GM12878 (cell line): ENCODE measurements at regions of chr12 and their contacts with region 1.

Region 1: GRCh38 chr12:39788235-39788634 is 168.6 kb upstream of the ABCD2 start:
- DNase-seq: no peak
- ATAC-seq: no peak
- H3K4me3 ChIP-seq: no peak overlapping the region
- H3K27ac ChIP-seq: no peak overlapping the region
- H3K4me1 ChIP-seq: no peaks in the 10 kb centered on the region
- H3K27me3 ChIP-seq: no peaks in the 10 kb centered on the region
- CTCF ChIP-seq: no peak
- EP300 ChIP-seq: no peak
- POLR2A ChIP-seq: no peak
- RAD21 ChIP-seq: no peak

Region 2: DNA sequence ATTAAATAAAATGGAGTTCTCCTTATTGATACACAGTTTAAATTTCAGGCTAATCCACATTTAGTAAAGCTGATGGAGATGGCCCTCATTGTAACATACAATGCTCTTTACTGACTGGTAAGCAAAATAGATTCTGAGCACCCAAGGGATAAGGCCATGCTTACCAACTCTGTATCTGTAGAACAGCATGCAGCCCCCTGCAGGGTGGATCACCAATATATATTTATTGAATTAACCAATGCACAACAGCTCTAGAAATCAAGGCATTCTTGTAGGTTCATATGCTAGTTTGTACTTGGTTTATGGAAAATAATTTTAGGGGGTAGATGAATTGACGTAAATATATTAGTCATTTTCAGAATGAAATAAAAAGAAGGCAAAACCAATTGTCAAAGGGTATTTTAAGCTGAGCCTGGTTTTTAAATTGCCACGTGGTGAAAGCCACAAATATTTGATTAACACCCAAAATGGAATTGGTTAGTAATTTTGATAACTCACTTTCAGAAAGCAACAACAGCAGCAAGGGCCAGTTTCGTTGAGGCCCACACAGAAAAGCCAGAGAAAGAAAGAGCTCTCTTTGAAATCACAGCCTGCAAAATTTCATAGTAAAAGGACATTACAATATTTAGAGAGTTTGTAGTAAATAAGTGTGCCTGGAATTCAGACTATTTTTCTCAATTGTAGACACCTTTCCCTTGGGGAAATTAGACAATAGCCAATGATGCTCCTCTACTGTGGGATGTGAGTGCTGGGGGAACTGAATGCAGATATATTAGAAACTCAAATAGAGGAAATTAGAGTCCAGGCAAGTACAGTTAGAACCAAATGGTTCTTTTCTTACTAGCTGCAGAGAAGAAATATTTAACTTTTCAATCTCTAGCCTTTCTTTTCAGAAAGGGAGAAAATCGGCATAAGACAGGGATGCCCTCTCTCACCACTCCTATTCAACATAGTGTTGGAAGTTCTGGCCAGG is 47.6 kb after region 1 on chr12:
- CTCF ChIA-PET with region 1: no interaction called
- POLR2A ChIA-PET with region 1: no interaction called
- RAD21 ChIA-PET with region 1: no interaction called
- SMC1A ChIA-PET with region 1: no interaction called
- in situ Hi-C with region 1: no loop called
- intact Hi-C with region 1: loop called (anchors 5 kb)
- DNase-seq: peak; percentile 19
- ATAC-seq: peak; percentile 80
- H3K4me3 ChIP-seq: no peak overlapping the region
- H3K27ac ChIP-seq: no peak overlapping the region
- H3K4me1 ChIP-seq: no peaks in the 10 kb centered on the region
- H3K27me3 ChIP-seq: no peaks in the 10 kb centered on the region
- CTCF ChIP-seq: no peak
- EP300 ChIP-seq: peak; percentile 38 to 59; a peak in 2 of 4 replicates
- POLR2A ChIP-seq: no peak
- RAD21 ChIP-seq: no peak

Region 3: DNA sequence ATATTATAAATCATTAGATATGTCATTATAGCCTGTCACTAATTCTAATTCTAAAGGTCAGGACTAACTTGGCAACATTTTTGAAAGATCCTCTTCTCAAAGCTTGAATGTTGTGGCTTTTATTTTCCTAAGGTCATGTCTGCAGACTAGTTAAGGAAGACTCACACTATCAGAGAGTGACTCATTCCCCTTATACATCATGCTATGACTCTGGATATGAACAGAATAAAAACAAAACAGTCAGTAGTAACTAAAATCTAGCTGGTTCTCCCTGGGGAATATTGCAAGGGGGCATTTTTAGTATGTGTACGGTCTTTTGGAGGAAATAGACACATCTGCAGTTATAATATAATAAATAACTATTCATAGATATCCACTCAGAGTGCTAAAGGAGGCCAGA is 147.0 kb after region 1 on chr12:
- CTCF ChIA-PET with region 1: no interaction called
- POLR2A ChIA-PET with region 1: no interaction called
- RAD21 ChIA-PET with region 1: no interaction called
- SMC1A ChIA-PET with region 1: no interaction called
- in situ Hi-C with region 1: no loop called
- intact Hi-C with region 1: no loop called
- DNase-seq: no peak
- ATAC-seq: no peak
- H3K4me3 ChIP-seq: no peak overlapping the region
- H3K27ac ChIP-seq: no peak overlapping the region
- H3K4me1 ChIP-seq: no peaks in the 10 kb centered on the region
- H3K27me3 ChIP-seq: no peaks in the 10 kb centered on the region
- CTCF ChIP-seq: no peak
- EP300 ChIP-seq: no peak
- POLR2A ChIP-seq: no peak
- RAD21 ChIP-seq: no peak